ENCODE measurements at regions of chr10 and their contacts with region 1.

Region 1: GRCh38 chr10:92175164-92175563 is 115.7 kb downstream of the CPEB3 start:
- DNase-seq: no peak
- ATAC-seq: no peak
- H3K4me3 ChIP-seq: no peak overlapping the region
- H3K4me3 Mint-ChIP-seq: no peak overlapping the region
- H3K27ac ChIP-seq: no peak overlapping the region
- H3K27ac Mint-ChIP-seq: no peak overlapping the region
- H3K4me1 ChIP-seq: no peaks in the 10 kb centered on the region
- H3K4me1 Mint-ChIP-seq: no peaks in the 10 kb centered on the region
- H3K27me3 ChIP-seq: no peaks in the 10 kb centered on the region
- H3K27me3 Mint-ChIP-seq: no peaks in the 10 kb centered on the region
- CTCF ChIP-seq: no peak

Region 2: GRCh38 chr10:90560331-90560730 is 1614.8 kb before region 1 on chr10:
- CTCF ChIA-PET with region 1: no interaction called
- POLR2A ChIA-PET with region 1: no interaction called
- intact Hi-C with region 1: no loop called
- DNase-seq: no peak
- ATAC-seq: no peak
- H3K4me3 ChIP-seq: no peak overlapping the region
- H3K4me3 Mint-ChIP-seq: no peak overlapping the region
- H3K27ac ChIP-seq: no peak overlapping the region
- H3K27ac Mint-ChIP-seq: no peak overlapping the region
- H3K4me1 ChIP-seq: no peaks in the 10 kb centered on the region
- H3K4me1 Mint-ChIP-seq: no peaks in the 10 kb centered on the region
- H3K27me3 ChIP-seq: no peaks in the 10 kb centered on the region
- H3K27me3 Mint-ChIP-seq: no peaks in the 10 kb centered on the region
- CTCF ChIP-seq: no peak

Region 3: GRCh38 chr10:92142949-92143348 is 32.2 kb before region 1 on chr10:
- CTCF ChIA-PET with region 1: no interaction called
- POLR2A ChIA-PET with region 1: no interaction called
- intact Hi-C with region 1: loop called in 1 of 2 experiments (anchors 1 kb)
- DNase-seq: no peak
- ATAC-seq: no peak
- H3K4me3 ChIP-seq: no peak overlapping the region
- H3K4me3 Mint-ChIP-seq: no peak overlapping the region
- H3K27ac ChIP-seq: no peak overlapping the region
- H3K27ac Mint-ChIP-seq: no peak overlapping the region
- H3K4me1 ChIP-seq: no peaks in the 10 kb centered on the region
- H3K4me1 Mint-ChIP-seq: peaks cover 8% of the 10 kb centered on the region
- H3K27me3 ChIP-seq: no peaks in the 10 kb centered on the region
- H3K27me3 Mint-ChIP-seq: no peaks in the 10 kb centered on the region
- CTCF ChIP-seq: no peak

Region 4: DNA sequence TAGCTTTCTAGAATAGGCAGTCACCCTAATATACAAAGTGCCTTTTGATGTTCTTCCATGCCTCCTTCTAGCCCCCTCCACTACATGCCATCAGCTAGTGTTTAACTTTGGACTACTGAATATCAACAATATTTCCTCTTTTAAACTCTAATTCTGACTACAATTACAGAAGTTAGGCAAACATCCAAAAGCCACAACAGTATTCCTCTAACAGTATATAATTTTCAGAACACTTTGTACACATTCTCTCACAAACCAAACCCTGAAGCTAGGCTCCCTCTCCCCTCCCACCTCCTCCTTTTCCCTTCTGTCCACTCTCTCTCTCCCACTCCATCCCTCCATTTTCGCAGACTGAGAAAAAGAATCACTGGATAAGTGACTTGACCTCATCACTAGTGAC is 56.0 kb after region 1 on chr10:
- CTCF ChIA-PET with region 1: no interaction called
- POLR2A ChIA-PET with region 1: no interaction called
- intact Hi-C with region 1: no loop called
- DNase-seq: no peak
- ATAC-seq: no peak
- H3K4me3 ChIP-seq: no peak overlapping the region
- H3K4me3 Mint-ChIP-seq: no peak overlapping the region
- H3K27ac ChIP-seq: no peak overlapping the region
- H3K27ac Mint-ChIP-seq: no peak overlapping the region
- H3K4me1 ChIP-seq: no peaks in the 10 kb centered on the region
- H3K4me1 Mint-ChIP-seq: no peaks in the 10 kb centered on the region
- H3K27me3 ChIP-seq: no peaks in the 10 kb centered on the region
- H3K27me3 Mint-ChIP-seq: no peaks in the 10 kb centered on the region
- CTCF ChIP-seq: no peak